Activated naive CD4-positive, alpha-beta T cell treated with anti-CD3 and anti-CD28 coated beads for 36 hours (primary cell): ENCODE measurements at regions of chr18 and their contacts with region 1.

Region 1: GRCh38 chr18:10787293-10787901 is 261.6 kb downstream of the NAPG start:
- DNase-seq: peak; percentile 94
- H3K4me3 Mint-ChIP-seq: no peak overlapping the region
- H3K27ac Mint-ChIP-seq: no peak overlapping the region
- H3K4me1 Mint-ChIP-seq: peaks cover 2% of the 10 kb centered on the region
- H3K27me3 Mint-ChIP-seq: peaks cover 14% of the 10 kb centered on the region

Region 2: GRCh38 chr18:9971313-9971920 is 816.0 kb before region 1 on chr18:
- CTCF ChIA-PET with region 1: no interaction called
- intact Hi-C with region 1: no loop called
- DNase-seq: peak; percentile 84
- H3K4me3 Mint-ChIP-seq: no peak overlapping the region
- H3K27ac Mint-ChIP-seq: no peak overlapping the region
- H3K4me1 Mint-ChIP-seq: peaks cover 7% of the 10 kb centered on the region
- H3K27me3 Mint-ChIP-seq: peaks cover 35% of the 10 kb centered on the region

Region 3: GRCh38 chr18:10525371-10526210 is 261.8 kb before region 1 on chr18 and contains the start of gene NAPG:
- CTCF ChIA-PET with region 1: no interaction called
- intact Hi-C with region 1: loop called (anchors 2 kb)
- DNase-seq: peak; percentile 88
- H3K4me3 Mint-ChIP-seq: peak within 1 kb of the TSS; percentile 95
- H3K27ac Mint-ChIP-seq: peak within 1 kb of the TSS; percentile 89
- H3K4me1 Mint-ChIP-seq: peaks cover 45% of the 10 kb centered on the region
- H3K27me3 Mint-ChIP-seq: no peaks in the 10 kb centered on the region
- total RNA-seq, gene NAPG: 20.2 to 21.0 TPM

Region 4: DNA sequence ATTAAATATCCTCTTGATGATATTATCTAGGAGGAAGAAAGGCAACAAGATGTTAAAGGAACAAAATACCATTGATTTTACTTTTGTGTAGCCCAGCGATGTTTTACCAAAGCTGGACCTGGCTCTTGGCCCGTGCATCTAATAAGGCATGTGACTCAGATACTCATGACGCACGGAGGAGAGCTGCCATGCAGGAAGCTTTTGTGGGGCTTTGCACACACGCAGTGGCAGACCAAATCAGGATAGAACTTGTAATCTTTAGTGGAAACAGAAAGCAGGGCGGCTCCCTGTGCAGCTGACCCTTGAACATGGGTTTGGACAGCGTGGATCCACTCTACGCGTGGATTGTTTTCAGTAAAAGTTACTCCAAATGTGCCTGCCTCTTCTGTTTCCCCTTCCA is 71.6 kb before region 1 on chr18:
- CTCF ChIA-PET with region 1: no interaction called
- intact Hi-C with region 1: no loop called
- DNase-seq: no peak
- H3K4me3 Mint-ChIP-seq: no peak overlapping the region
- H3K27ac Mint-ChIP-seq: no peak overlapping the region
- H3K4me1 Mint-ChIP-seq: no peaks in the 10 kb centered on the region
- H3K27me3 Mint-ChIP-seq: no peaks in the 10 kb centered on the region

Region 5: GRCh38 chr18:10726198-10726965 is 61.0 kb before region 1 on chr18:
- CTCF ChIA-PET with region 1: no interaction called
- intact Hi-C with region 1: no loop called
- DNase-seq: no peak
- H3K4me3 Mint-ChIP-seq: no peak overlapping the region
- H3K27ac Mint-ChIP-seq: no peak overlapping the region
- H3K4me1 Mint-ChIP-seq: no peaks in the 10 kb centered on the region
- H3K27me3 Mint-ChIP-seq: peaks cover 16% of the 10 kb centered on the region

Region 6: DNA sequence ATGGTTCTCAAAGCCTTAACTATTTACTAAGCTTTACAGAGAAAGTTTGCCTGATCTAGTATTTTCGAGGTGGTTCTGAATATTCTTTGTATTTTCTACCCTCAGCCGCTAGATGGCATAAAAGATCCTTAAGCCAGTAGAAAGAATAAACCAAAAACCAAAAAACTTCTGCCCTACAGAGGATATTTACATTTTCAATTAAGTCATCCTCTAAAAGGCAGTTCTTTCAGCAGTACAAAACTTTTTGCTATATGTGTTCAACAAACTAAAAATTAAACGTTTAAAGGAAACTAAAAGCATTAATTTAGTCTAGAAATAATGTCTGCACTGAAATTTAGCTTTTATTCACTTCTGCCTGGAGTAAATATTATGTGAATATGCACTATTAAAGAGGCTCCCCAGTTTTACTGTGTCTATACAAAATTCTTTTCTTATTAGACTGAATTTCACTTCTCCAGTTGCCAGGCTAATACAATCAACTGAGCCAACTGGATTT is 64.5 kb after region 1 on chr18:
- CTCF ChIA-PET with region 1: interaction called, 5 read pairs
- intact Hi-C with region 1: loop called (anchors 5 kb)
- DNase-seq: no peak
- H3K4me3 Mint-ChIP-seq: no peak overlapping the region
- H3K27ac Mint-ChIP-seq: no peak overlapping the region
- H3K4me1 Mint-ChIP-seq: no peaks in the 10 kb centered on the region
- H3K27me3 Mint-ChIP-seq: peaks cover 2% of the 10 kb centered on the region

Region 7: GRCh38 chr18:11154368-11154989 is 367.1 kb after region 1 on chr18:
- CTCF ChIA-PET with region 1: no interaction called
- intact Hi-C with region 1: loop called (anchors 2 kb)
- DNase-seq: no peak
- H3K4me3 Mint-ChIP-seq: no peak overlapping the region
- H3K27ac Mint-ChIP-seq: no peak overlapping the region
- H3K4me1 Mint-ChIP-seq: no peaks in the 10 kb centered on the region
- H3K27me3 Mint-ChIP-seq: peaks cover 26% of the 10 kb centered on the region

Region 8: DNA sequence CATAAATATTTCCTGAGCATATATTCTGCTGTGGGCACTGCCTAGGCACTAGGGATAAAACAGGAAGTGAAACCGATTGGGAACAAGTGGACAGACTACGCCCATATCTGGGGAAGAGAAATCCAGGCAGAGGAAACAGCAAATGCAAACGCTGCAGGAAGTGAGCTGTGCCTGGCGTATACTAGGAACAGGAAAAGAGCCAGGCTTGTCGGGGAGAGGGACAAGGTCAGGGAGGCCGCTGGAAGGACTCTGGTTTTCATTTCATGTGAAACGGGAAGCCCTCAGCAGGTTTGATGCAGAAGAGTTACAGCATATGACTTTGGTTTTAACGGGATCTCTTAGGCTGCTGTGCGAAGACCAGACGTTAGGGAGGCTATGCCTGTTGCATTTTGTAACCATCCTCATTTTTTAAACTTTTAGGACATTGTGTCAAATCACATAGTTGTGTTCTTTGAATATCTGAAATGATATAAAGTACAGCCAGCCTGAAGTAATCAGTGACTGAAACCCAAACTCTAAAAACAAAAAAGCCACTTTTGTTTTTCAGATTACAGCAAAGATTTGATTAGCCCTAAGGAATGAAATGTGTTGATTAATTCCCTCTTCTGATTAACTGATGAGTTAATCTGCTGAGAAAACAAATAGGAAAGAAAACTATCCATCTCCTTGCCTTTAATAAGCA is 472.2 kb after region 1 on chr18:
- CTCF ChIA-PET with region 1: no interaction called
- intact Hi-C with region 1: no loop called
- DNase-seq: no peak
- H3K4me3 Mint-ChIP-seq: no peak overlapping the region
- H3K27ac Mint-ChIP-seq: no peak overlapping the region
- H3K4me1 Mint-ChIP-seq: no peaks in the 10 kb centered on the region
- H3K27me3 Mint-ChIP-seq: peaks cover 3% of the 10 kb centered on the region

Region 9: GRCh38 chr18:11553098-11553940 is 765.9 kb after region 1 on chr18:
- CTCF ChIA-PET with region 1: interaction called, 3 read pairs
- intact Hi-C with region 1: loop called (anchors 2 kb)
- DNase-seq: peak; percentile 53
- H3K4me3 Mint-ChIP-seq: no peak overlapping the region
- H3K27ac Mint-ChIP-seq: no peak overlapping the region
- H3K4me1 Mint-ChIP-seq: no peaks in the 10 kb centered on the region
- H3K27me3 Mint-ChIP-seq: peaks cover 4% of the 10 kb centered on the region